ENCODE measurements at regions of chr6 and their contacts with region 1.

Region 1: GRCh38 chr6:29016559-29017427 is 11.7 kb upstream of the ZNF311 start:
- DNase-seq: peak; percentile 90
- ATAC-seq: peak; percentile 90
- H3K4me3 Mint-ChIP-seq: peak overlapping the region; percentile 83
- H3K27ac Mint-ChIP-seq: peak overlapping the region; percentile 83
- H3K4me1 Mint-ChIP-seq: peaks cover 15% of the 10 kb centered on the region
- H3K27me3 Mint-ChIP-seq: peaks cover 32% of the 10 kb centered on the region

Region 2: DNA sequence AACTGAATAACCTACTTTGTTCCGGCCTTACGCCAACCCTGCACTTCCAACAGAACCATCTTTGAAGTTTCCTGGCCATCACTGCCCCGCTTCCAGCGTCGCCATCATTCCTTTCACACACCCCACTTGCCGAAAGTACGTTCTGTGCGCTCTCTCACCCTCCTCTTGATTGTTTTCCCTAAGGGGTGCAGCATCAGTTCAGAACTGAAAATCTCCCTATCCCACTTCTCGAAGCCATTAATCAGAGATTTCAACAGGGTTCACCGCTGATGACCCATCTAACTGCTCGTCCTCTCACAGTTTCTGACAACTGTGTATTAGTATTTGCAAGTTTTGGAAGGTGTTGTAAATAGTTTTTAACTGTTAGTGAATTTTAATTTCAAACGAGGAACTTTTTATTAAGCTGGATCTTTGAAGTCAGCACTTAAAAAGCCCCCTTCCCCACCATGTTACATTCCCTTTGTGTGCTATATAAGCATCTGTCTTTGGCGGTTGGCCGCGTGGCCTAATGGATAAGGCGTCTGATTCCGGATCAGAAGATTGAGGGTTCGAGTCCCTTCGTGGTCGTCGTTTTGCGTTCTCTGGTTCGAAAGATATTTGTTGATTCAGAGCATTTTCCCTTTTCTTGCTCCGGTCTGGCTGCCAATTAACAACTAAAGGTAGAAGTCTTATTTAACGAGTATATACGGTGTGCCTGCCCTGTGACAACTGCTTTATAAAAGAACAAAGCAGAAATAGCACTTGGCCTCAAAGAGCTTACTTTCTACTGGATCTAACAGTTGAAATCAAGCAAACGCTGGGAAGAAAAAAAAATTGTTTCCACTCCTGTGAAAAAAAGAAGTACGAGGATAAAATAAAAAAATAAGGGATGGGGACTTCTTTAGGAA is 135.7 kb before region 1 on chr6:
- CTCF ChIA-PET with region 1: interaction called, 13 read pairs
- POLR2A ChIA-PET with region 1: interaction called, 3 read pairs
- DNase-seq: peak; percentile 76
- ATAC-seq: no peak
- H3K4me3 Mint-ChIP-seq: peak overlapping the region; percentile 74
- H3K27ac Mint-ChIP-seq: peak overlapping the region; percentile 73
- H3K4me1 Mint-ChIP-seq: peaks cover 45% of the 10 kb centered on the region
- H3K27me3 Mint-ChIP-seq: peaks cover 21% of the 10 kb centered on the region

Region 3: GRCh38 chr6:28940858-28941680 is 75.7 kb before region 1 on chr6:
- CTCF ChIA-PET with region 1: interaction called, 13 read pairs
- POLR2A ChIA-PET with region 1: no interaction called
- DNase-seq: peak; percentile 89
- ATAC-seq: peak; percentile 81
- H3K4me3 Mint-ChIP-seq: peak overlapping the region; percentile 80
- H3K27ac Mint-ChIP-seq: peak overlapping the region; percentile 94
- H3K4me1 Mint-ChIP-seq: peaks cover 47% of the 10 kb centered on the region
- H3K27me3 Mint-ChIP-seq: no peaks in the 10 kb centered on the region

Region 4: GRCh38 chr6:28996844-28997510 is 19.8 kb before region 1 on chr6:
- CTCF ChIA-PET with region 1: interaction called, 17 read pairs
- POLR2A ChIA-PET with region 1: interaction called, 7 read pairs
- DNase-seq: no peak
- ATAC-seq: no peak
- H3K4me3 Mint-ChIP-seq: no peak overlapping the region
- H3K27ac Mint-ChIP-seq: no peak overlapping the region
- H3K4me1 Mint-ChIP-seq: no peaks in the 10 kb centered on the region
- H3K27me3 Mint-ChIP-seq: peaks cover 7% of the 10 kb centered on the region

Measured in activated CD8-positive, alpha-beta T cell treated with anti-CD3 and anti-CD28 coated beads, Interleukin-2, amount 10 ng/mL, durations not matched to agents 7 days and 5 days (primary cell).